CD8-positive, alpha-beta T cell (primary cell): ENCODE measurements at regions of chr2 and their contacts with region 1.

Region 1: GRCh38 chr2:233053928-233054784 is 6.0 kb upstream of the INPP5D start:
- DNase-seq: peak; percentile 37 to 84 (median 76)
- ATAC-seq: peak; percentile 78
- H3K4me3 ChIP-seq: no peak overlapping the region
- H3K4me3 Mint-ChIP-seq: no peak overlapping the region
- H3K27ac ChIP-seq: no peak overlapping the region
- H3K27ac Mint-ChIP-seq: no peak overlapping the region
- H3K4me1 ChIP-seq: peaks cover 12% of the 10 kb centered on the region
- H3K4me1 Mint-ChIP-seq: peaks cover 19% of the 10 kb centered on the region
- H3K27me3 ChIP-seq: peaks cover 0 to 3% of the 10 kb centered on the region in 2 experiments
- H3K27me3 Mint-ChIP-seq: no peaks in the 10 kb centered on the region
- CTCF ChIP-seq: peak; percentile 97

Region 2: GRCh38 chr2:232854082-232854481 is 200.1 kb before region 1 on chr2:
- CTCF ChIA-PET with region 1: interaction called, 3 read pairs
- POLR2A ChIA-PET with region 1: no interaction called
- intact Hi-C with region 1: loop called in 1 of 2 experiments (anchors 5 kb)
- DNase-seq: no peak
- ATAC-seq: no peak
- H3K4me3 ChIP-seq: no peak overlapping the region
- H3K4me3 Mint-ChIP-seq: no peak overlapping the region
- H3K27ac ChIP-seq: no peak overlapping the region
- H3K27ac Mint-ChIP-seq: peak overlapping the region; percentile 69
- H3K4me1 ChIP-seq: no peaks in the 10 kb centered on the region
- H3K4me1 Mint-ChIP-seq: no peaks in the 10 kb centered on the region
- H3K27me3 ChIP-seq: no peaks in the 10 kb centered on the region
- H3K27me3 Mint-ChIP-seq: no peaks in the 10 kb centered on the region
- CTCF ChIP-seq: no peak

Region 3: DNA sequence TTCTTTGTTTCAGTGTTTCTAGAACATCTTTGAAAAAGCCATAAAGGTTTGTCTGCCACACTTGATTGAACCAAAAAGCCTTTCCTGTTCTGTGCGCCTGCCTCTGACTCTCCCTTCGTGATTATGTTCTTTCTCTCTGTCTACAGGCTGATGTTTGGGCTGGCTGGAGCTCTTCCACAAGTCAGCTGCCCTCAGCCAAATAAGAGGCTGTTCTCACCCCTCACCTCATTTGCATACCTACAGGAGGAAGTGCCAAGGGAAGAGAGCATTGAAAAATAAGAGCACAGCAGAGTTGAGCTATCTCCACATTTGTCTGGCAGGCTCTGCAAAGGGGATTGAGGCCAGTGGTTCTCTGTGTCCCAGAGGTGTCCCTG is 21.8 kb after region 1 on chr2:
- CTCF ChIA-PET with region 1: interaction called, 38 read pairs
- POLR2A ChIA-PET with region 1: interaction called, 89 read pairs
- intact Hi-C with region 1: no loop called
- DNase-seq: peak in 5 of 9 experiments; percentile 37 to 83 (median 67)
- ATAC-seq: peak; percentile 70
- H3K4me3 ChIP-seq: peak overlapping the region; percentile 18 to 22
- H3K4me3 Mint-ChIP-seq: no peak overlapping the region
- H3K27ac ChIP-seq: peak overlapping the region; percentile 25 to 80
- H3K27ac Mint-ChIP-seq: no peak overlapping the region
- H3K4me1 ChIP-seq: peaks cover 79% of the 10 kb centered on the region
- H3K4me1 Mint-ChIP-seq: peaks cover 47% of the 10 kb centered on the region
- H3K27me3 ChIP-seq: no peaks in the 10 kb centered on the region
- H3K27me3 Mint-ChIP-seq: no peaks in the 10 kb centered on the region
- CTCF ChIP-seq: no peak

Region 4: GRCh38 chr2:233100192-233100998 is 46.2 kb after region 1 on chr2:
- CTCF ChIA-PET with region 1: interaction called, 19 read pairs
- POLR2A ChIA-PET with region 1: interaction called, 3 read pairs
- intact Hi-C with region 1: no loop called
- DNase-seq: peak; percentile 39 to 95 (median 77)
- ATAC-seq: peak; percentile 81
- H3K4me3 ChIP-seq: peak overlapping the region; percentile 20 to 32
- H3K4me3 Mint-ChIP-seq: peak overlapping the region; percentile 66
- H3K27ac ChIP-seq: peak overlapping the region; percentile 30 to 81
- H3K27ac Mint-ChIP-seq: peak overlapping the region; percentile 92
- H3K4me1 ChIP-seq: peaks cover 47% of the 10 kb centered on the region
- H3K4me1 Mint-ChIP-seq: peaks cover 67% of the 10 kb centered on the region
- H3K27me3 ChIP-seq: no peaks in the 10 kb centered on the region
- H3K27me3 Mint-ChIP-seq: no peaks in the 10 kb centered on the region
- CTCF ChIP-seq: no peak

Region 5: DNA sequence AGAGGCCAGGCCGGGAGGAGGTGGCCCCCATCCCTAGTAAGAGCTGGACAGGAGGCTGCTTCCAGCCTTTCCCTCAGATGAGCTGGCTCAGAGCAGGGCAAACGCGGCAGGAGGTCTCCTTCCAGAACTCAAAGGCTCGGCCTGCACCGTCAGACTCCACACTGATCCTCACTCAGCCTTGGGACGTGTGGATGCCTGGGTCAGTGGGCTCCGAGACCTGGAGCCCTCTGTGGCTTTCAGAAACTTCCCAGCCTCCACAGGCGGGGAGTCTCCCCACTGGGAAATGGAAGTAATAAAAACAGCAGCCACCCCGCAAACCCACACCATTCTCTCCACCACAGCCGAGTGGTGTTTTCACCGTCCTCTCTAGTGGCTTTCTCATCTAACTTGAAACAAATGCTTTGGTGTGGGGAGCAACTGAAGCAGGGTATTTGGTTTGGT is 60.3 kb after region 1 on chr2:
- CTCF ChIA-PET with region 1: interaction called, 13 read pairs
- POLR2A ChIA-PET with region 1: no interaction called
- intact Hi-C with region 1: no loop called
- DNase-seq: peak in 3 of 9 experiments; percentile 21 to 74 (median 55)
- ATAC-seq: peak; percentile 65
- H3K4me3 ChIP-seq: peak overlapping the region in 1 of 2 experiments; percentile 8
- H3K4me3 Mint-ChIP-seq: peak overlapping the region; percentile 58
- H3K27ac ChIP-seq: peak overlapping the region in 1 of 2 experiments; percentile 52
- H3K27ac Mint-ChIP-seq: peak overlapping the region; percentile 60
- H3K4me1 ChIP-seq: peaks cover 56% of the 10 kb centered on the region
- H3K4me1 Mint-ChIP-seq: peaks cover 78% of the 10 kb centered on the region
- H3K27me3 ChIP-seq: no peaks in the 10 kb centered on the region
- H3K27me3 Mint-ChIP-seq: no peaks in the 10 kb centered on the region
- CTCF ChIP-seq: no peak

Region 6: GRCh38 chr2:233135421-233135820 is 81.3 kb after region 1 on chr2:
- CTCF ChIA-PET with region 1: interaction called, 15 read pairs
- POLR2A ChIA-PET with region 1: no interaction called
- intact Hi-C with region 1: no loop called
- DNase-seq: no peak
- ATAC-seq: no peak
- H3K4me3 ChIP-seq: no peak overlapping the region
- H3K4me3 Mint-ChIP-seq: no peak overlapping the region
- H3K27ac ChIP-seq: no peak overlapping the region
- H3K27ac Mint-ChIP-seq: no peak overlapping the region
- H3K4me1 ChIP-seq: no peaks in the 10 kb centered on the region
- H3K4me1 Mint-ChIP-seq: peaks cover 9% of the 10 kb centered on the region
- H3K27me3 ChIP-seq: no peaks in the 10 kb centered on the region
- H3K27me3 Mint-ChIP-seq: no peaks in the 10 kb centered on the region
- CTCF ChIP-seq: no peak